Activated CD4-positive, alpha-beta T cell treated with anti-CD3 and anti-CD28 coated beads, Interleukin-2, amount 10 ng/mL, durations not matched to agents 7 days and 5 days (primary cell): ENCODE measurements at regions of chr3 and their contacts with region 1.

Region 1: GRCh38 chr3:141561426-141562034 is 74.7 kb downstream of the RASA2 start:
- DNase-seq: peak; percentile 71
- H3K4me3 Mint-ChIP-seq: no peak overlapping the region
- H3K27ac Mint-ChIP-seq: peak overlapping the region; percentile 68
- H3K4me1 Mint-ChIP-seq: peaks cover 21% of the 10 kb centered on the region
- H3K27me3 Mint-ChIP-seq: no peaks in the 10 kb centered on the region

Region 2: GRCh38 chr3:141426404-141427034 is 135.0 kb before region 1 on chr3:
- CTCF ChIA-PET with region 1: no interaction called
- POLR2A ChIA-PET with region 1: no interaction called
- DNase-seq: no peak
- H3K4me3 Mint-ChIP-seq: no peak overlapping the region
- H3K27ac Mint-ChIP-seq: peak overlapping the region; percentile 50
- H3K4me1 Mint-ChIP-seq: peaks cover 3% of the 10 kb centered on the region
- H3K27me3 Mint-ChIP-seq: no peaks in the 10 kb centered on the region

Region 3: GRCh38 chr3:141460097-141460704 is 101.3 kb before region 1 on chr3:
- CTCF ChIA-PET with region 1: interaction called, 13 read pairs
- POLR2A ChIA-PET with region 1: interaction called, 6 read pairs
- DNase-seq: peak; percentile 92
- H3K4me3 Mint-ChIP-seq: no peak overlapping the region
- H3K27ac Mint-ChIP-seq: no peak overlapping the region
- H3K4me1 Mint-ChIP-seq: peaks cover 15% of the 10 kb centered on the region
- H3K27me3 Mint-ChIP-seq: no peaks in the 10 kb centered on the region

Region 4: DNA sequence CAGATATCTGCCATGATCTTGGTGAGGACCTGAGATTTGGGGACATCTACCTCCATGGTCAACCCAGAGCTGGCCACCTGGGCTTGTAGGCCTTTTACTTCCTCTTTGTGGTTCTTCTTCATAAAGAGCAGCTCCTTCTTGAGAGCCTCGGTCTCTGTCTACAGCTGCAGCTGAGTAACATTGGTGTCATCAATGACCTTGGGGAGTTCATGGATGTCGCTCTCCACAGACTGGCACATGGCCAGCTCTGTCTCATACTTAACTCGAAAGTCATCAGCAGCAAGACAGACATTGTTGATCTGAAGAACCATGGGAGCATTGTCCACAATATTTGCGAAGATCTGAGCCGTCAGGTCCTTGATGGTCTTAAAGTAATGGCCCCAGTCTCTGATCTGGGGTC is 90.4 kb before region 1 on chr3:
- CTCF ChIA-PET with region 1: interaction called, 11 read pairs
- POLR2A ChIA-PET with region 1: no interaction called
- DNase-seq: no peak
- H3K4me3 Mint-ChIP-seq: no peak overlapping the region
- H3K27ac Mint-ChIP-seq: no peak overlapping the region
- H3K4me1 Mint-ChIP-seq: peaks cover 21% of the 10 kb centered on the region
- H3K27me3 Mint-ChIP-seq: peaks cover 7% of the 10 kb centered on the region

Region 5: DNA sequence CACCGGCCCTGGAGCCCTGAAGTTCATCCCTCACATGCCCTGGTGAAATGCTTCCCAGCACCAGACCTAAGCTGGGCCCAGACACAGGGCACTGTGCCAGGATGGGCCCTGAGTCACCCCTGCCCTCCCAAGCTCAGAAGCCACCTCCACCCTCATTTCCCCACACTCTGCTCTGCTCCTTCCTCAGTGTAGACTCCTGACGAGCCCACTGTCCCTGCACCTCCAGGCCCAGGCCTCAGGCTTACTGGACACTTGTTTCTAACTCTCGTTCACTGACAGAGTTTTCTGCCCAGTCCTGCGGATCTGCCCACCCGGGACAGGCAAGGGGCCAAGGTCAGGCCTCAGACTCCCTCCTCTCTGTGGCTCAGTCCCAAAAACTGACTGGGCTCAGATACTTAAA is 64.0 kb after region 1 on chr3:
- CTCF ChIA-PET with region 1: no interaction called
- POLR2A ChIA-PET with region 1: no interaction called
- DNase-seq: no peak
- H3K4me3 Mint-ChIP-seq: no peak overlapping the region
- H3K27ac Mint-ChIP-seq: no peak overlapping the region
- H3K4me1 Mint-ChIP-seq: no peaks in the 10 kb centered on the region
- H3K27me3 Mint-ChIP-seq: no peaks in the 10 kb centered on the region